ENCODE measurements at regions of chr10 and their contacts with region 1.

Region 1: GRCh38 chr10:112471878-112472487 is 25.0 kb downstream of the VTI1A start:
- H3K4me3 ChIP-seq: no peak overlapping the region
- H3K27ac ChIP-seq: no peak overlapping the region
- H3K4me1 ChIP-seq: peaks cover 7% of the 10 kb centered on the region
- CTCF ChIP-seq: peak; percentile 43; the same call in 1 of the 2 replicates

Region 2: DNA sequence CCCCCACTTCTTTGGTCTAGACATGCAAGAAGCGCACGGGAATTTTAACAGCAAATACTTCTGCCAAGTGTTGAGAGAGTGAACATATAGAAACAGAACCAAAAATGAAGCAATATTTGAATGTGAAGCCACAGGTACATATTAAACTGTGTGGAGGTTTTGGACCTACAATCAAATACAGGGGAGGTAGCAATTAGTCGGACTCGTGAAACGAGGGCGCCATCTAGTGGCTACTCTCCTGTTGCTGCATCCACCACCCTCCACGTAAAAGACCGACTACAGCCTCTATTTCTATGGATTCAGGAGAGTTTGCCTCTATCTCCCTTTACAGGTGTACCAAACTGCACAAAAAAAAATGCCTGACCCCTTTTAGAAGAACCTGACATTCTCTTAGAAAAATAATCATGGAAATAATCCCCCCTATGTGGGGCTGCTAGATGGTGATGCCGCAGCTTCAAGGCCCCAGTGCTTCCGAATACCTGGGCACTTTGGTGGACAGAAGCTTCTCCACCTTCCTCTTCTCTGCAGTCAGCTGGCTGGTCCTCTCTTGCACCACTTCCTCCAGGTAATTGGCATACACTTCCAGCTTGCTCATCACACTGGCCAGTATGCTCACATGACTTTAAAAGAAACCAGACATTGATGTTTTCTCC is 157.0 kb before region 1 on chr10:
- CTCF ChIA-PET with region 1: interaction called, 11 read pairs
- POLR2A ChIA-PET with region 1: no interaction called
- H3K4me3 ChIP-seq: no peak overlapping the region
- H3K27ac ChIP-seq: no peak overlapping the region
- H3K4me1 ChIP-seq: no peaks in the 10 kb centered on the region
- CTCF ChIP-seq: peak; percentile 71; the same call in 1 of the 2 replicates

Region 3: GRCh38 chr10:112484399-112484798 is 12.4 kb after region 1 on chr10:
- CTCF ChIA-PET with region 1: interaction called, 15 read pairs
- POLR2A ChIA-PET with region 1: no interaction called
- H3K4me3 ChIP-seq: no peak overlapping the region
- H3K27ac ChIP-seq: no peak overlapping the region
- H3K4me1 ChIP-seq: no peaks in the 10 kb centered on the region
- CTCF ChIP-seq: no peak

Region 4: GRCh38 chr10:113385021-113385999 is 913.3 kb after region 1 on chr10:
- CTCF ChIA-PET with region 1: interaction called, 18 read pairs
- POLR2A ChIA-PET with region 1: no interaction called
- H3K4me3 ChIP-seq: no peak overlapping the region
- H3K27ac ChIP-seq: no peak overlapping the region; the same call in 1 of the 2 replicates
- H3K4me1 ChIP-seq: no peaks in the 10 kb centered on the region; the same call in 1 of the 2 replicates
- CTCF ChIP-seq: peak; percentile 90

Region 5: GRCh38 chr10:113521123-113521795 is 1049.3 kb after region 1 on chr10:
- CTCF ChIA-PET with region 1: interaction called, 10 read pairs
- POLR2A ChIA-PET with region 1: no interaction called
- H3K4me3 ChIP-seq: no peak overlapping the region
- H3K27ac ChIP-seq: no peak overlapping the region
- H3K4me1 ChIP-seq: peaks cover 6% of the 10 kb centered on the region
- CTCF ChIP-seq: peak; percentile 89